ENCODE measurements at regions of chr18 and their contacts with region 1.

Region 1: GRCh38 chr18:22471546-22472131 is 53.9 kb upstream of the CTAGE1 start:
- DNase-seq: peak in 4 of 5 donors; percentile 74 to 89 (median 82)
- ATAC-seq: peak; percentile 88 to 95 (median 92)
- H3K4me3 ChIP-seq: no peak overlapping the region
- H3K27ac ChIP-seq: peak overlapping the region; percentile 58 to 97 (median 85)
- H3K4me1 ChIP-seq: peaks cover 0 to 53% (median 42%) of the 10 kb centered on the region in 12 donors
- H3K27me3 ChIP-seq: no peaks in the 10 kb centered on the region
- CTCF ChIP-seq: no peak
- POLR2A ChIP-seq: peak in 1 of 2 donors; percentile 33

Region 2: GRCh38 chr18:22194151-22194598 is 277.5 kb before region 1 on chr18:
- intact Hi-C with region 1: loop called in 1 of 10 experiments (anchors 5 kb)
- DNase-seq: peak in 3 of 5 donors; percentile 51 to 60 (median 55)
- ATAC-seq: peak; percentile 18 to 68 (median 50)
- H3K4me3 ChIP-seq: peak overlapping the region in 8 of 12 donors; percentile 3 to 40 (median 8)
- H3K27ac ChIP-seq: peak overlapping the region; percentile 11 to 100 (median 81)
- H3K4me1 ChIP-seq: peaks cover 8 to 98% (median 70%) of the 10 kb centered on the region in 12 donors
- H3K27me3 ChIP-seq: no peaks in the 10 kb centered on the region
- CTCF ChIP-seq: no peak
- POLR2A ChIP-seq: no peak

Region 3: GRCh38 chr18:22551536-22552151 is 80.0 kb after region 1 on chr18:
- intact Hi-C with region 1: loop called in 7 of 10 experiments (anchors 2 to 10 kb)
- DNase-seq: no peak
- ATAC-seq: peak in 2 of 4 donors; percentile 36 to 40
- H3K4me3 ChIP-seq: no peak overlapping the region
- H3K27ac ChIP-seq: peak overlapping the region in 4 of 12 donors; percentile 9 to 24 (median 20)
- H3K4me1 ChIP-seq: peaks cover 0 to 36% (median 14%) of the 10 kb centered on the region in 12 donors
- H3K27me3 ChIP-seq: no peaks in the 10 kb centered on the region
- CTCF ChIP-seq: no peak
- POLR2A ChIP-seq: no peak